WTC11 (cell line): ENCODE measurements at regions of chr17 and their contacts with region 1.

Region 1: DNA sequence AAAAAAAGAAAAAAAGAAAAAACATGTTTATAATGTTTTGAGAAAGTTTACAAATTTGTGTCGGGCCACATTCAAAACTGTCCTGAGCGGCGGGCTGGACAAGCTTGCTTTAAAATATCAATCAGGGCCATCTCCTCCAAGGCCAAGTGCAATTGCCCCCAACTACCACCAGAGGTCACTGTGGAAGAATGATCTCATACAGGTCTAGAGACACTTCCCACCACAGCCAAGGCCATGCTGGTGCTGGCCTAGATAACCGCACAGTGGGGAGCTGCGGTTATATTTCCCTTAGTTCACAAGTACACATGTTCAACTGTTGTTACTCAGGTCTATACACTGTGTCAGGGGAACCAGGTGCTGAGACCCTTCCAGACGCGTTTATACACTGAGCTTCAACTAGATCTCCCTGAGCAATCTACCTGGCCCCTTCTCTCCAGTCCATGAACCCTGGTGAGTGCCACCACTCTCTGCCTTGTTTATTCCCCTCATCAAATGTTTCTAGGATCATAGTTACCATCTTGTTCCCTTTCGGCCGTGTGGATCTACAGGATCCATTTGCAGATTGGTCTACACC is 83.8 kb upstream of the CCL2 start:
- DNase-seq: peak; percentile 78
- ATAC-seq: peak; percentile 94
- H3K4me3 Mint-ChIP-seq: no peak overlapping the region
- H3K27ac Mint-ChIP-seq: no peak overlapping the region
- H3K4me1 Mint-ChIP-seq: peaks cover 29% of the 10 kb centered on the region
- H3K27me3 Mint-ChIP-seq: no peaks in the 10 kb centered on the region; the same call in 1 of the 2 replicates
- CTCF ChIP-seq: peak; percentile 96

Region 2: GRCh38 chr17:33927732-33928133 is 243.6 kb before region 1 on chr17:
- CTCF ChIA-PET with region 1: interaction called, 13 read pairs
- POLR2A ChIA-PET with region 1: no interaction called
- DNase-seq: no peak
- ATAC-seq: no peak
- H3K4me3 Mint-ChIP-seq: no peak overlapping the region
- H3K27ac Mint-ChIP-seq: no peak overlapping the region
- H3K4me1 Mint-ChIP-seq: peaks cover 53% of the 10 kb centered on the region
- H3K27me3 Mint-ChIP-seq: no peaks in the 10 kb centered on the region
- CTCF ChIP-seq: no peak

Region 3: DNA sequence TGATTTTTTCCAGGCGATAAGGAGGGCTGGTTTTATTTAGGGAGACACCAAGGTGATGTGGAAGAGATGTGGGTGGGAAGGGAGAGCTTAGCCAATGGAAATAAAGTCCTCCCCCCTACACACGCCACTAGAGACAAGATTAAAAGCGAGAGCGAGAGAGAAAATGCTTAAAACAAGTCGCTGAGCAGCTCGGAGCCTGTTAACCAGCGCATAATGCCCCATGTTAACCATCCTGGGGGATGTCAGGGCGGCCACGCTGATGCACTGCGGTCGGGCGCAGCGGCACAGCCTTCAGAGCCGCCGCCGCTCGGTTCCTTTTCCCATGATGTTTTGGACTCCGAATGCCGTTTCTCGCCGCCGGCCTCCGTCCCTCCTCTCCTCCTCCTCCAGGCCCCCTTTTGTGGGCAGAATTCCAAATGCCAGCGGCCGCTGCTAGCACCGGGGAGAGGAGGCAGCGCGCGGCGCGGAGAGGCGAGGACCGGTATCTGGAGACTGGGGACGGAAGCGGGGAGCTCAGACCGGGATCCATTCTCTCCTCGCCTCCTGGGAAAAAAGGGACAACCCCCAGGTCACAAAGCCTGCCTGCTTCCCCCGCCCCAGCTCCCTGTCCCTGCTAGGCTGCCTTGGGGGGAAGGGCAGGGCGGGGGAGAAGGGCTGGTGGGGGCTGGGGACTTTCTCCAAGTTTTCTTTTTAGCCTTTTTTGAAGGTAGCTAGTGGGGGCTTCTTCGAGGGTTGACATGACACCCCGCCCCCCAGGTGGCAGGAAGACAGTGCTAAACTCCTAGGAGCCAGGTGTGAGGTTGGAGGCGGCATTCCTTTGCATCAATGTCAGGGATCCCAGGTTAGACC is 14.4 kb before region 1 on chr17:
- CTCF ChIA-PET with region 1: interaction called, 46 read pairs
- POLR2A ChIA-PET with region 1: interaction called, 4 read pairs
- DNase-seq: peak; percentile 85
- ATAC-seq: peak; percentile 45
- H3K4me3 Mint-ChIP-seq: peak overlapping the region; percentile 85
- H3K27ac Mint-ChIP-seq: peak overlapping the region; percentile 98
- H3K4me1 Mint-ChIP-seq: peaks cover 86% of the 10 kb centered on the region
- H3K27me3 Mint-ChIP-seq: peaks cover 14% of the 10 kb centered on the region
- CTCF ChIP-seq: no peak

Region 4: DNA sequence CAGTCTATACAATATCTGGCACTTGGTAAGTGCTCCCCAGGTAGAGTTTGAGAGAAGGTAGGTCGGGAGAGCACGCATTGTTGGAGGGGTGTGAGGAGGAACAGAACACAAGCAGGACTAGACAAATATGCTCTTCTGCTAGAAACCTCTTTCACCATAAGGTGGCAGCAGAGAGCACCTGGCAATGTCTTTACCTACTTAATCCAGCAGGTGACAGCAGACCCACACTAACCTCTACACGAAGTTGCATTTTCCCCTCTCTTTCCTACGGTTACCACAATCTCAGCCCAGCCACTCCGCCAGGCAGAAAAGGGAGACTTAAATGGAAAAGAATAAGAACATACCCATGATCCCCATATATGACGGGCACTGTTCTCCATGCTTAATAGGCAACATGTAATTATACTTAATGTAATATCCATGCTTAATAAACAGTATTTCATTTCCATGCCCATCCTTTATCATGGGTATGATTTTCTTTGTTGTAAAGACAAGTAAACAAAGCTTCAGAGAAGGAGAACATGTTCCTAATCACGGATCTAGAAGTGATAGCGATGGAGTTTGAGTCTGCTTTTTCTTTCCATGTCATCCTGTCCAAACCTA is 28.7 kb after region 1 on chr17:
- CTCF ChIA-PET with region 1: interaction called, 13 read pairs
- POLR2A ChIA-PET with region 1: no interaction called
- DNase-seq: peak; percentile 77
- ATAC-seq: peak; percentile 94
- H3K4me3 Mint-ChIP-seq: no peak overlapping the region
- H3K27ac Mint-ChIP-seq: no peak overlapping the region
- H3K4me1 Mint-ChIP-seq: peaks cover 13% of the 10 kb centered on the region
- H3K27me3 Mint-ChIP-seq: peaks cover 11% of the 10 kb centered on the region
- CTCF ChIP-seq: peak; percentile 100

Region 5: DNA sequence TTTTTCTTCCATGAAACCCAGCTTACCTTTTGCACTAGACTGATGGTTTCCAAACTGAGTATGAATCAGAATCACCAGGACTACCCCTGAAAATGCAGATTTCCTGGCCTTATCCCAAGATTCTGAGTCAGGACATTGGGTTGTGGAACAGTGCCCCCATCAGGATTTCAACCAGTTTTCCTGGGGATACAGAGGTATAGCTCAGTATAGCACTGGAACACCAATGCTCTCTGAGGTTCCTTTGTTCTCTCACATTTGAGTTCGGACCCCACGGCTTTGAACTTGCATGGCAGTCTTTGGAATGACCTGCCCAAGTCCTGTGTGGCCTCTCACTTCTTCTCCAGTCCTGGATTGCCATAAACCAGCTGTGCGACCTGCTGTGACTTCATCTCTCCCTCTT is 135.1 kb after region 1 on chr17:
- CTCF ChIA-PET with region 1: interaction called, 17 read pairs
- POLR2A ChIA-PET with region 1: no interaction called
- DNase-seq: peak; percentile 51
- ATAC-seq: peak; percentile 98
- H3K4me3 Mint-ChIP-seq: no peak overlapping the region
- H3K27ac Mint-ChIP-seq: no peak overlapping the region
- H3K4me1 Mint-ChIP-seq: peaks cover 5% of the 10 kb centered on the region
- H3K27me3 Mint-ChIP-seq: no peaks in the 10 kb centered on the region; the same call in 1 of the 2 replicates
- CTCF ChIP-seq: no peak